ENCODE measurements at regions of chr10 and their contacts with region 1.

Region 1: GRCh38 chr10:66180581-66181318 is 745.1 kb upstream of the LRRTM3 start:
- DNase-seq: peak in 2 of 9 experiments; percentile 48 to 57
- ATAC-seq: peak; percentile 69
- H3K4me3 ChIP-seq: no peak overlapping the region
- H3K4me3 Mint-ChIP-seq: no peak overlapping the region
- H3K27ac ChIP-seq: no peak overlapping the region
- H3K27ac Mint-ChIP-seq: no peak overlapping the region
- H3K4me1 ChIP-seq: no peaks in the 10 kb centered on the region
- H3K4me1 Mint-ChIP-seq: peaks cover 3% of the 10 kb centered on the region
- H3K27me3 ChIP-seq: no peaks in the 10 kb centered on the region
- H3K27me3 Mint-ChIP-seq: no peaks in the 10 kb centered on the region
- CTCF ChIP-seq: peak; percentile 64

Region 2: GRCh38 chr10:66151346-66151745 is 29.4 kb before region 1 on chr10:
- CTCF ChIA-PET with region 1: no interaction called
- POLR2A ChIA-PET with region 1: no interaction called
- intact Hi-C with region 1: loop called in 1 of 2 experiments (anchors 2 kb)
- DNase-seq: no peak
- ATAC-seq: no peak
- H3K4me3 ChIP-seq: no peak overlapping the region
- H3K4me3 Mint-ChIP-seq: no peak overlapping the region
- H3K27ac ChIP-seq: no peak overlapping the region
- H3K27ac Mint-ChIP-seq: no peak overlapping the region
- H3K4me1 ChIP-seq: no peaks in the 10 kb centered on the region
- H3K4me1 Mint-ChIP-seq: no peaks in the 10 kb centered on the region
- H3K27me3 ChIP-seq: no peaks in the 10 kb centered on the region
- H3K27me3 Mint-ChIP-seq: no peaks in the 10 kb centered on the region
- CTCF ChIP-seq: no peak